Panc1 (cell line): ENCODE measurements at regions of chr20 and their contacts with region 1.

Region 1: DNA sequence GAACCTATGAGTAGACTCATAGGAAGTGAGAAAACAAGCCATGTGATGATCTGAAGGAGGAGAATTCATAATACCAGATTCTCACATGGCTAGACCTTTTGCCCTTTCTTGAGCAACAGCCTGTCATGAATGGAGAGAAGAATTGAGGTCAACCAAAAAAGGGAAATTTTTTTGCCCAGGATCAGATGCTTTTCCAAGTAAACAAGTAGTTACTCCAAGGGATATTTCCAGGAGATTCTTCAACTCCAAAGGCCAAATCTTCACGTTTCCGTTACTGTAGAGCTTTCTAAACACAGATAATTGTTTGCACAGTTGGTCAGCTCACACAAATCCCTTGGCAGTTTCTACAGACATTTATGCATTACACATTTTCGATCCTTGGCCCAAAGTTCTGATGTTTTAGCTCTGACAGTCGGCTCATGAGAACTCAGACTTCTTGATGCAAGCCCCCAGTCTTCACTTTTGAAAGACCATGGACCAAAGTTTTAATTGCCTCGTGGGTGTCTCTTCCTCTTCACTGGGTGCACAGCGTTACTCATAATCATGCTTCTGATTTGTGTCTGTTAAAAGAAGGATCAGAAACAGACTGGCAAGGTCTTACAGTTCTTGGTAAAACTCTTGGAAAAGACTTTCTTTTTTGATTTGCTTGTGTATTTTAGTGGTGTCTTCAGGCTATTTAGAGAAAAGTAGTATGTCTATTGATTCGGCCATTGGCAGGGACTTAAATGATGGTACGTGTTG is 115.0 kb downstream of the TSHZ2 start:
- DNase-seq: no peak
- ATAC-seq: no peak
- H3K4me3 ChIP-seq: no peak overlapping the region
- H3K27ac ChIP-seq: no peak overlapping the region
- H3K4me1 ChIP-seq: no peaks in the 10 kb centered on the region
- H3K27me3 ChIP-seq: no peaks in the 10 kb centered on the region; the same call in 1 of the 2 replicates
- CTCF ChIP-seq: no peak

Region 2: GRCh38 chr20:52766645-52767435 is 320.4 kb before region 1 on chr20:
- CTCF ChIA-PET with region 1: no interaction called
- POLR2A ChIA-PET with region 1: no interaction called
- in situ Hi-C with region 1: no loop called
- intact Hi-C with region 1: no loop called
- DNase-seq: no peak
- ATAC-seq: no peak
- H3K4me3 ChIP-seq: no peak overlapping the region
- H3K27ac ChIP-seq: no peak overlapping the region
- H3K4me1 ChIP-seq: no peaks in the 10 kb centered on the region
- H3K27me3 ChIP-seq: no peaks in the 10 kb centered on the region
- CTCF ChIP-seq: no peak

Region 3: DNA sequence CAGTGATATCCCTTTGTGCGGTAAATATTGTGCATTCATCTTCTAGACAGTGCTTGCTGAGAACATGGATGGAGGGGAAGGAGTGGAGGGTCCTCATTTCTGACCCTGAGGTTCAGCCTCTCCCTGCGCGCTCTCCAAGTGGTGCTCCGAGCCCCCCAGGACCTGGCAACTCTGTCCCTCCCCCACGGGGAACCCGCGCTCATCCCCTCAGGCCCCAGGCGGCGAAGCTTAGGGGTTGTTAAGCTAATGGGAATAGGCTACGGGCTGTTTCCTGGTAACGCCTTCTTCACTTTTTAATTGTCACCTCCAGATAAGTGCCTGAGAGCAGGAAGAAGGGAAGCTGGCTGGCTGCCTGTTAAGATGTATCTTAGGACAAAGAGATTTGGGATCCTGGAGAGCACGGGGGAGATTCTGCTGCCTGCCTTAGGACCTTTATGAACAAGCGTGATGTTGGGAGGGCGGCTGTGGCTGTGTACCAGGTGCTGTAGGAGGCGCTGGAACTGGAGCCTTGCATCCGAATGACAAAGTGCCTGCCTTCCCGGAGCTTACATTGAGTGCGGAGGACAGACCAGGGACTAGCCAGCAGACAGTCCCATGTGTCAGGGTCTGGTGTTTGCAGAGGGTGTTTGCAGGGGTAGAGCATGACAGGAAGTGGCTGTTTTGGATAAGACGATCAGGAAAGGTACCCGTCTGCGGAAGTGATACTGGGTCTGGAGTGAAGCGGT is 103.3 kb before region 1 on chr20:
- CTCF ChIA-PET with region 1: no interaction called
- POLR2A ChIA-PET with region 1: no interaction called
- in situ Hi-C with region 1: no loop called
- intact Hi-C with region 1: no loop called
- DNase-seq: no peak
- ATAC-seq: no peak
- H3K4me3 ChIP-seq: no peak overlapping the region
- H3K27ac ChIP-seq: no peak overlapping the region
- H3K4me1 ChIP-seq: no peaks in the 10 kb centered on the region
- H3K27me3 ChIP-seq: peaks cover 4% of the 10 kb centered on the region; the same call in 1 of the 2 replicates
- CTCF ChIP-seq: no peak

Region 4: GRCh38 chr20:53061192-53062108 is 25.8 kb before region 1 on chr20:
- CTCF ChIA-PET with region 1: no interaction called
- POLR2A ChIA-PET with region 1: no interaction called
- in situ Hi-C with region 1: no loop called
- intact Hi-C with region 1: no loop called
- DNase-seq: no peak
- ATAC-seq: no peak
- H3K4me3 ChIP-seq: no peak overlapping the region
- H3K27ac ChIP-seq: no peak overlapping the region
- H3K4me1 ChIP-seq: no peaks in the 10 kb centered on the region
- H3K27me3 ChIP-seq: no peaks in the 10 kb centered on the region
- CTCF ChIP-seq: no peak

Region 5: GRCh38 chr20:53168491-53168890 is 81.3 kb after region 1 on chr20:
- CTCF ChIA-PET with region 1: interaction called, 14 read pairs
- POLR2A ChIA-PET with region 1: no interaction called
- in situ Hi-C with region 1: no loop called
- intact Hi-C with region 1: no loop called
- DNase-seq: no peak
- ATAC-seq: no peak
- H3K4me3 ChIP-seq: no peak overlapping the region
- H3K27ac ChIP-seq: no peak overlapping the region
- H3K4me1 ChIP-seq: no peaks in the 10 kb centered on the region
- H3K27me3 ChIP-seq: peaks cover 5% of the 10 kb centered on the region
- CTCF ChIP-seq: no peak